Motor neuron (in vitro differentiated cells): ENCODE measurements at regions of chr6 and their contacts with region 1.

Region 1: GRCh38 chr6:159104163-159104925 is 59.6 kb upstream of the TAGAP start:
- ATAC-seq: peak; percentile 81 to 97 (median 86)
- H3K4me3 ChIP-seq: no peak overlapping the region
- H3K27ac ChIP-seq: no peak overlapping the region
- H3K4me1 ChIP-seq: peaks cover 0 to 9% of the 10 kb centered on the region in 2 donors

Region 2: DNA sequence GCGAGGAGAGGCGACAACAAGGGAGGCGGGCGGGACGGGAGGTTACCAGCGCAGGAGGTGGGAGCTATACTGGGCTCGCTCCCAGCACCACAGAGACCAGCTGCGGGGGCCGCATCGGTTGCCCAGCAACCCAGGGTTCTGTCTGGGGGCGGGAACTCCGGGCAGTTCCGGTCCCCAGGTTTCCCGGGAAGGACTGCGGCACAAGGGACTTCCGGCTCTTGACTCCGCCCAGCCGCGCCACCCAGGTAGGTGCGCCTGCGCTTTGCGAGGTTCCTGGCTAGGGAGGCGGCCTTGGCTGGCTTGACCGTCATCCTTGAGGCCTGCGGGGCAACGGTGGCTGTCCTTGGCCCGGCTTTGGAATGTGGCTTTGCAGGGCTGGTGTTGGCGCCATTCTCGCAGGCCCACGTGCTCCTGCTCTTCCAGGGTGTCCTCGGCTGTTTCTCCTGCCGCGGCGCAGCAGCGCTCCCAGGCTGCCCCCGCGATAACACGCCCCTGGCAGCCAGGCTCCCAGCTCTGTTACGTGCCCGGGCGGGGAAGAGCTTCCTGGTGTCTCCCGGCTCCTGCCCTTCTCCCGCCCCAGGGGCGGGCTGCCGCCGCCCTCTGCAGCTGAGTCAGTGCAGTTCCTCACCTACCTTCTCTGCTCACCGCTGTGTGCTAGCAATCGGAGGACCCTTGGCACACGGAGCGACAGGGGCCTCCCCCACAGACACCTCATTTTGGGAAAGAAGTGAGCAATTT is 104.5 kb before region 1 on chr6 and contains the start of gene RSPH3:
- in situ Hi-C with region 1: loop called in 2 of 9 experiments (anchors 25 kb)
- ATAC-seq: peak; percentile 87 to 94 (median 92)
- H3K4me3 ChIP-seq: peak within 1 kb of the TSS; percentile 52 to 77 (median 62)
- H3K27ac ChIP-seq: peak within 1 kb of the TSS; percentile 94 to 96
- H3K4me1 ChIP-seq: peaks cover 6 to 9% of the 10 kb centered on the region in 2 donors
- total RNA-seq, gene RSPH3: 2.8 to 13.7 (median 4.7) TPM

Region 3: DNA sequence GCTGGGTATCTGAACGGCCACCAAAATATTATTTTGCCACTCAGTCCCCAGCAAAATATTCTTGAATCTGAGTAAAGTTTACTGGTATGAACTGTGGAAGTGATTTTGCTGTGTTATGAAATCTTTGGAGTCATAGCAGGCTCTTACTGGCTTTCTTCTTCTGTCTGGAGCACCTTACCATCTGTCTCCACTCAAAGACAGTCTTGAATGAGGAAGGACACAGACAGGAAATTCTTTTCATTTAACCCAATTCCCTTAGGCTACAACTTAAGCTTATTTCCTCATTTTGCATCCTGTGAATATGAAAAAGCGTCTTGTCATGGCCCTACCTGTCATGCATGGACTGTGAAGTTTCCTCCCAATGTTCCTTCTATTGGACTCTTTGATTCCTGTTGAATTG is 89.6 kb after region 1 on chr6:
- in situ Hi-C with region 1: no loop called
- ATAC-seq: peak in 3 of 8 experiments; percentile 18 to 47 (median 23)
- H3K4me3 ChIP-seq: no peak overlapping the region
- H3K27ac ChIP-seq: no peak overlapping the region
- H3K4me1 ChIP-seq: no peaks in the 10 kb centered on the region

Region 4: DNA sequence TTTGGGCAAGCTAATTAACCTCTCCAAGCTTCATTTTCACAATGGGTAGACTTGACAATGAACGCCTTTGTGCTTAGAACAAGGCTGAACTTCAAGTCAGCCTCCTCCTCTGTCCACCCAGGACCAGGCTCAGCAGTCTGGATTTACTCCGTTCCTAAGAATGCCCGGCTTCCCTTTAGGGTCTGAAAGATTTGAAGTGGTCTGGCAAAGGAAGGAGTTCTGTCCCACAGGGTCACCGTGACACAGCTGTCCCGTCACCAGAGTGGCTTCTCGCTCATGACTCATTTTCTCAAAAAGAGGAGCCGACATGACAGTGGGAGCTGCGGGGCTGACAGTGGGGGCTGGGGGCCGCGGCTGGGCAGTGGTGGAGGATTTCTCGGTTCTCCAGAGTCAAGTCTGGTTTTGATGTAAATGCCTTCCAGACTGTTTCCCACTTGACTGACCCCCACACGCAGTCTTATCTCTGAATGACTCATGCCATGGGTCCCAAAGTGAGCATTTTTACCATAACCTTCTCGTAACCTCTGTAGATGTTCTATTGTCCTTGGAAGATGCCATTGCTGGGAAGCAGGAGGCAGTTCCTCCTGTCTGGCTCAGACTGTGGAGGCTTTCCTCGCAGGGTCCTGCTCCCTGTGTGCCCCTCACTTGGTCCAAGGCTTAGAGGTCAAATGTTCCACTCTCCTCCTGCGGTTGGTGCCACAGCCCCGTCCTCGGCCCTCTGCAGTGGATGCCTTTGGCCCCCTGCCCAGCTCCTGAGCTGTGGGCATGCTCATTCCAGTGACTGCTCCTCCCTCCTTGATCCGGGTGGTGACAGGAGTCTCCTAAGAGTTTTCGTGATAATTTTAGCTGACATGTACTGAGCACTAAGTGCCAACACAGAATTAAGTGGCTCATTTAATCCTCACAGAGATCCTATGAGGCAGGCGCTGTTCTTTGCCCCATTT is 318.0 kb after region 1 on chr6:
- in situ Hi-C with region 1: no loop called
- ATAC-seq: no peak
- H3K4me3 ChIP-seq: no peak overlapping the region
- H3K27ac ChIP-seq: no peak overlapping the region
- H3K4me1 ChIP-seq: no peaks in the 10 kb centered on the region